ENCODE measurements at regions of chr4 and their contacts with region 1.

Region 1: DNA sequence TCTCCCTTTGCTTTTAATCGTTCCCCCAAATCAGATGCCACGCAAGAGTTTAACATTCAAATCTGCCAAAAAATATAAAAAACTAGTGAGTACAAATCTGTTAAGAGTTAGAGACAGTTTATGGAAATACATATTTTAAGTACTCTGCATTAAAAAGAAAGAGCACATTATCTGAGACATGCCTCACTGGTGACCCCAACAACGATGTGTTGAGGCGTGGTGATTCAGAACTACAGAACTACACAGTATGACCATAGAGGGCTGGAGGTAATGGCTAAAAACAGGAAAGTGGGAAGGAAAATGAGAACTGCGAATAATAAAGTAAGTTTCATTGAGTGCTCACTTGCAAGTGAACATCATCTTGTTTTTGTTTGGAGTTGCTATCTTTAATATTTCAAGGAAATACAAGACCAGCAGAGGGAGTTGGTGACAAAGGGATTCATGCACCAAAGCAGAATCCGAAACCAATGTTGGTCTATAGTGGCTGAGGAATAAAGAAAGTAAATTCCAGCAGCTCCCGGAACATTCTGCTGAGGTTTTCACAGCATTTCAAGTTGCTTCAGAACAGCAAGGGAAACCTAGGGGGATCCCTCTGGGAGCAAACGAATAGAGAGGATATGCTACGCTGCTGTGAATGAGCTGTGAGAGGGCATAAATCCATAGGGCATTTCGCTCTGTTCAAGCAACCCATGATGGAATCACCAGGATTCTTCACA is 92.2 kb downstream of the DCHS2 start:
- DNase-seq: no peak
- H3K4me3 ChIP-seq: peak overlapping the region; percentile 14 to 43 (median 40)
- H3K27ac ChIP-seq: peak overlapping the region in 3 of 4 donors; percentile 45 to 64 (median 58)
- H3K4me1 ChIP-seq: no peaks in the 10 kb centered on the region
- H3K27me3 ChIP-seq: no peaks in the 10 kb centered on the region
- CTCF ChIP-seq: peak; percentile 48 to 60 (median 54)
- EP300 ChIP-seq: no peak
- POLR2A ChIP-seq: no peak

Region 2: GRCh38 chr4:154368060-154368459 is 31.4 kb before region 1 on chr4:
- intact Hi-C with region 1: no loop called
- DNase-seq: no peak
- H3K4me3 ChIP-seq: no peak overlapping the region
- H3K27ac ChIP-seq: peak overlapping the region in 1 of 4 donors; percentile 59
- H3K4me1 ChIP-seq: peaks cover 0 to 46% (median 32%) of the 10 kb centered on the region in 4 donors
- H3K27me3 ChIP-seq: no peaks in the 10 kb centered on the region
- CTCF ChIP-seq: no peak
- EP300 ChIP-seq: no peak
- POLR2A ChIP-seq: no peak

Region 3: GRCh38 chr4:154491341-154492271 is 92.2 kb after region 1 on chr4 and contains the start of gene DCHS2:
- intact Hi-C with region 1: loop called (anchors 5 kb)
- DNase-seq: peak; percentile 78
- H3K4me3 ChIP-seq: peak within 1 kb of the TSS; percentile 46 to 57 (median 52)
- H3K27ac ChIP-seq: peak within 1 kb of the TSS in 3 of 4 donors; percentile 60 to 77 (median 76)
- H3K4me1 ChIP-seq: peaks cover 0 to 36% (median 19%) of the 10 kb centered on the region in 4 donors
- H3K27me3 ChIP-seq: peaks cover 0 to 10% (median 0%) of the 10 kb centered on the region in 3 donors
- CTCF ChIP-seq: no peak
- EP300 ChIP-seq: no peak
- POLR2A ChIP-seq: no peak
- total RNA-seq, gene DCHS2: 13.6 to 24.1 (median 17.2) TPM

Region 4: DNA sequence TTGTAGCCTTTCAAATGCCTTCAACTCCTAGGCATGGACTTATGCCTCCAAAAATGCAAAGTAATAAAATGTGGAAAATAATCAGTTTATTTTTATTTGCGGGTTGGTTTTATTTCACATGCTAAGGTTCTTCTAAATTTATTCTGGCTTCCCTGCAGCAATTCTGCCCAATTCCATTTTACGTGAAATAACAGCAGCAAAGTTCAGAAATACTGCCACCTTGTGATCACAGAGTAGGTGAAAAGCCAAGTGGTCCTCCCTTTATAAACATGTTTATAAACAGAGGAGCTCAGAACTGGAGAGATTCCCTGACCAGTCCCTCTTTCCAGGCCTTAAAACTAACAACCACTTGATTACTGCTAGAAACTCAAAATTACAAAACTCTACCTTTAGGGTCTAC is 106.8 kb after region 1 on chr4:
- intact Hi-C with region 1: loop called (anchors 1 kb)
- DNase-seq: no peak
- H3K4me3 ChIP-seq: no peak overlapping the region
- H3K27ac ChIP-seq: no peak overlapping the region
- H3K4me1 ChIP-seq: no peaks in the 10 kb centered on the region
- H3K27me3 ChIP-seq: no peaks in the 10 kb centered on the region
- CTCF ChIP-seq: peak; percentile 28 to 56 (median 46)
- EP300 ChIP-seq: no peak
- POLR2A ChIP-seq: no peak

Measured in sigmoid colon (tissue), 7 donors.